ENCODE measurements at regions of chr19 and their contacts with region 1.

Region 1: DNA sequence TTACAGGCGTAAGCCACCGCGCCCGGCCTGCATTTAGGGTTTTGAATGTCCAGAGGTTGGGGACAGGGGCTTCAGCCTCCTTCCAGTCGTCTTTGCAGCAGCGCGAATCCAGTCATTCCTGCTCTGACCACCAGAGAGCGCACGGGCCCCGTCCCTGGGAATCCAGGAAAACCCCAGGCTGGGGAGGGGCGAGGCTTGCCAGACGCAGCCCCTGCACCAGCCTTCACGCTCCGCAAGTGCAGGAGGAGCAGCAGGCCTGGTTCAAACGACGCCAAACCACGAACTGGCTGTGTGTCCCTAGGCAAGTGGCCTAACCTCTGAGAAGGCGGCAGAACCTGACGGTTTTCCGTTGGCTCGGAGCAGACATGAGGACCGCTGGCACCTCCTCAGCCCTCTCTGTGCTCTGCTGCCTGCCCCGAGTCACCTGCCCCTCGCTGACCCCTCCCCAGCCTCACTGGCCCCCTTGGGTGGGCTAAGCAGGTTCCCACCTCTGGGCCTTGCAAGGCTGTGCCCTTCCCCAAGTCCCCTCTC is 2.0 kb upstream of the RNF126 start:
- DNase-seq: peak; percentile 86 to 94 (median 92)
- H3K4me3 ChIP-seq: peak overlapping the region in 2 of 3 donors; percentile 25 to 58
- H3K27ac ChIP-seq: no peak overlapping the region
- H3K4me1 ChIP-seq: peaks cover 0 to 36% (median 8%) of the 10 kb centered on the region in 3 donors
- H3K27me3 ChIP-seq: no peaks in the 10 kb centered on the region
- CTCF ChIP-seq: peak; percentile 98

Region 2: GRCh38 chr19:572140-572742 is 92.7 kb before region 1 on chr19 and contains the start of gene BSG:
- intact Hi-C with region 1: no loop called
- DNase-seq: peak; percentile 98 to 100 (median 99)
- H3K4me3 ChIP-seq: peak within 1 kb of the TSS; percentile 69 to 84 (median 75)
- H3K27ac ChIP-seq: peak within 1 kb of the TSS; percentile 83 to 89
- H3K4me1 ChIP-seq: peaks cover 0 to 34% (median 9%) of the 10 kb centered on the region in 3 donors
- H3K27me3 ChIP-seq: no peaks in the 10 kb centered on the region
- CTCF ChIP-seq: peak; percentile 0
- total RNA-seq, gene BSG: 554 TPM

Region 3: DNA sequence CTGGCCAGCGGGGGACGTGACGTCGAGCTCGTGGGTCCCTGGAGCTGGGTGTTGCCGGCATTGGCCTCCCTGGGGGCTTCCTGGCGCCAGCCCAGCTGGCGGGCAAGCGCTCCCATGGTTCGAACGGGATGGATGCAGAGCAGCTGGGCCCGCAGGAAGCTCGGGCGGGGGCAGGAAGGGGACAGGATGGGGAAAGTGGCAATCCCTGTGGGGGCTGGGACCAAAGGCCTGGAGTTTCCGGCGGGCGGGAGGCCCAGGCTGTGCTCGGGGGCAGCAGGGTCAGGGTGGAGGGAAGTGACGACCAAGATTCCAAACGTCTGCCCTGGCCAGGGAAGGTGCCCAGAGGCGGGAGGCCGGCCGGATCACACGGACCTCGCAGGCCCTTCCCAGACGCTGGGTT is 63.0 kb after region 1 on chr19:
- intact Hi-C with region 1: loop called (anchors 5 kb)
- DNase-seq: peak in 2 of 5 donors; percentile 84 to 96
- H3K4me3 ChIP-seq: no peak overlapping the region
- H3K27ac ChIP-seq: peak overlapping the region; percentile 78 to 81
- H3K4me1 ChIP-seq: peaks cover 0 to 3% (median 0%) of the 10 kb centered on the region in 3 donors
- H3K27me3 ChIP-seq: no peaks in the 10 kb centered on the region
- CTCF ChIP-seq: no peak

Region 4: DNA sequence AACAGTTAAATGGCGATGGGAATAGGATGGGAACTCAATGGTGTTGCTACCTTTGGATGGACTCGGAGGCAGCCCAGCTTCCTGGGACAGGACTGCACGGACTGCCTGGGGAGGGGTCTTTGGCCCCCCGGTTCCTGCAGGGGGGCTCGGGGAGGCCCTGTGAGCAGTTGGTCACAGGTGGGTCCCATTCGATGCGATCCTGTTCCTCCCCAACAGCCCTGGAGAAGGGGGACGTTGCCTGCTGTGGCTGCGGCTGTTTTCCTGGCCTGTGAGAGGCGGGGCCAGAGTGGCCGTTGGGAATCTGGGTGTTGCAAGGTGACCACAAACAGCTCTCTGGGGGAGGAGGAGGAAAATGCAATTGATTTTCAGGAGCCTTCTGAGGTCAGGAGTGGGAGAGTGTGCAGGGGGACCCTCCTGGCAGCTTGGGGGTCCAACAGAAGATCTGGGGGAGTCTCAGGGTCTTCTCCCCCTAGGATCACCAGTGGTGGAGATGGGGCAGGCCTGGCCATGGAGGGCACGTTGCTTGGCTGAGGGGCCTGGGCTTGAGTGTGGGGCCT is 158.7 kb after region 1 on chr19:
- intact Hi-C with region 1: no loop called
- DNase-seq: no peak
- H3K4me3 ChIP-seq: no peak overlapping the region
- H3K27ac ChIP-seq: no peak overlapping the region
- H3K4me1 ChIP-seq: no peaks in the 10 kb centered on the region
- H3K27me3 ChIP-seq: no peaks in the 10 kb centered on the region
- CTCF ChIP-seq: no peak

Measured in kidney (tissue), 22 donors.